CD4-positive, alpha-beta memory T cell (primary cell): ENCODE measurements at regions of chr2 and their contacts with region 1.

Region 1: GRCh38 chr2:73947412-73948018 is 20.8 kb downstream of the DGUOK start:
- DNase-seq: no peak
- H3K4me3 ChIP-seq: no peak overlapping the region
- H3K4me3 Mint-ChIP-seq: no peak overlapping the region
- H3K27ac ChIP-seq: no peak overlapping the region
- H3K27ac Mint-ChIP-seq: peak overlapping the region in 3 of 7 donors; percentile 37 to 66 (median 61)
- H3K4me1 ChIP-seq: peaks cover 25% of the 10 kb centered on the region
- H3K4me1 Mint-ChIP-seq: peaks cover 37 to 82% (median 60%) of the 10 kb centered on the region in 4 donors
- H3K27me3 ChIP-seq: no peaks in the 10 kb centered on the region
- H3K27me3 Mint-ChIP-seq: no peaks in the 10 kb centered on the region

Region 2: DNA sequence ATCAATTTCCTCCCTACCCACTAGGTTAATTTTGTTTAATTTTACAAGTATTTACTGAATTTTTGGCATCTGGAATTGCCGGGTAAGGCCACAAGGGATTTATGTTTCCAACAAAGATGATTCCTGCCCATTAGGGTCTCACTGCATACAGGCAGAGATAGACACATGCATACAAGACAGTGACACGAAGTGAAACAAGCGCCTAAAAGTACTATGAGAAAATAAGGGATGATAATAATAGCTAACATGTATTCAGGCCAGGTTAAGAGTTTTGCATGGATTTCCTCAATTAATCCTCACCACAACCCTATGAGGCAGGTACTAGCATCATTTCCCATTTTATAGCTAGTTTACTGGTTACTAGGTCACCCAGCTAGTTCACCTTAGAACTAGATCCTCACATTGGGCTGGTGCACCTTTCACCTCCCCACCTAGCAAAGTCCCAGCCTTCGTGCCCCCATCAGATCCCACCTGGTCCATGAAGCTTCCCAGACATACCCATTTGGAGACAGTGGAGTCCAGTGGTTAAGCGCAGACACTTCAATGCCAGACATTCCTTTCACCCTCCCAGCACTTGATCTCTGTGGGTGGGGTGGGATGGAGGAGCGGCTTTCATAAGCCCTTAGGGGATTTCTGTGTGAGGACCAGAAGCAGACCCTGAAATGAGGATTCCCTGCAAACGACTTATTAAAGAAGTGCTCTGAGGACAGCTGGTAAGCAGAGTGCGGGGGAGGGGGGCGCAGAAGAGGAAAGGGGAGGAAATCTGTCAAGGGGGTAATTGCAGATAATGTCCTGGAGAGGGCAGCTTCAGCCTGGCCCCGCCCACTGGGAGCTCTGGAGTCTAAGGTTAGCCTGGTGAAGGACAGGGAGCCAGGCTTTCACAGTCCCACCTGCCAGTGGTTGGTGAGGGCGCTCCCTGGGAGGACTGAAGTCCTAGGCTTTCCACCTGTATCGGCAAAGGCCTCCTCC is 26.7 kb before region 1 on chr2:
- CTCF ChIA-PET with region 1: no interaction called
- POLR2A ChIA-PET with region 1: no interaction called
- intact Hi-C with region 1: no loop called
- DNase-seq: peak in 2 of 5 donors; percentile 22 to 25
- H3K4me3 ChIP-seq: no peak overlapping the region
- H3K4me3 Mint-ChIP-seq: no peak overlapping the region
- H3K27ac ChIP-seq: no peak overlapping the region
- H3K27ac Mint-ChIP-seq: peak overlapping the region in 3 of 7 donors; percentile 37 to 74 (median 51)
- H3K4me1 ChIP-seq: peaks cover 2% of the 10 kb centered on the region
- H3K4me1 Mint-ChIP-seq: peaks cover 0 to under 1% (median under 1%) of the 10 kb centered on the region in 4 donors
- H3K27me3 ChIP-seq: no peaks in the 10 kb centered on the region
- H3K27me3 Mint-ChIP-seq: no peaks in the 10 kb centered on the region

Region 3: GRCh38 chr2:73963385-73964120 is 16.0 kb after region 1 on chr2:
- CTCF ChIA-PET with region 1: interaction called, 3 read pairs
- POLR2A ChIA-PET with region 1: interaction called, 3 read pairs
- intact Hi-C with region 1: loop called (anchors 2 kb)
- DNase-seq: no peak
- H3K4me3 ChIP-seq: no peak overlapping the region
- H3K4me3 Mint-ChIP-seq: peak overlapping the region in 7 of 8 donors; percentile 6 to 73 (median 52)
- H3K27ac ChIP-seq: no peak overlapping the region
- H3K27ac Mint-ChIP-seq: peak overlapping the region; percentile 1 to 83 (median 42)
- H3K4me1 ChIP-seq: peaks cover 6% of the 10 kb centered on the region
- H3K4me1 Mint-ChIP-seq: peaks cover 14 to 32% (median 17%) of the 10 kb centered on the region in 4 donors
- H3K27me3 ChIP-seq: no peaks in the 10 kb centered on the region
- H3K27me3 Mint-ChIP-seq: no peaks in the 10 kb centered on the region

Region 4: GRCh38 chr2:74092275-74092674 is 144.8 kb after region 1 on chr2:
- CTCF ChIA-PET with region 1: no interaction called
- POLR2A ChIA-PET with region 1: no interaction called
- intact Hi-C with region 1: no loop called
- DNase-seq: no peak
- H3K4me3 ChIP-seq: no peak overlapping the region
- H3K4me3 Mint-ChIP-seq: no peak overlapping the region
- H3K27ac ChIP-seq: no peak overlapping the region
- H3K27ac Mint-ChIP-seq: peak overlapping the region in 1 of 7 donors; percentile 37
- H3K4me1 ChIP-seq: no peaks in the 10 kb centered on the region
- H3K4me1 Mint-ChIP-seq: no peaks in the 10 kb centered on the region
- H3K27me3 ChIP-seq: no peaks in the 10 kb centered on the region
- H3K27me3 Mint-ChIP-seq: no peaks in the 10 kb centered on the region